ENCODE measurements at regions of chr2 and their contacts with region 1.

Region 1: GRCh38 chr2:63841254-63842022 is at the start of gene UGP2:
- DNase-seq: peak; percentile 88
- H3K4me3 Mint-ChIP-seq: peak within 1 kb of the TSS; percentile 99
- H3K27ac Mint-ChIP-seq: peak within 1 kb of the TSS; percentile 99
- H3K4me1 Mint-ChIP-seq: peaks cover 37% of the 10 kb centered on the region
- H3K27me3 Mint-ChIP-seq: no peaks in the 10 kb centered on the region
- total RNA-seq, gene UGP2: 82.2 to 93.1 TPM

Region 2: DNA sequence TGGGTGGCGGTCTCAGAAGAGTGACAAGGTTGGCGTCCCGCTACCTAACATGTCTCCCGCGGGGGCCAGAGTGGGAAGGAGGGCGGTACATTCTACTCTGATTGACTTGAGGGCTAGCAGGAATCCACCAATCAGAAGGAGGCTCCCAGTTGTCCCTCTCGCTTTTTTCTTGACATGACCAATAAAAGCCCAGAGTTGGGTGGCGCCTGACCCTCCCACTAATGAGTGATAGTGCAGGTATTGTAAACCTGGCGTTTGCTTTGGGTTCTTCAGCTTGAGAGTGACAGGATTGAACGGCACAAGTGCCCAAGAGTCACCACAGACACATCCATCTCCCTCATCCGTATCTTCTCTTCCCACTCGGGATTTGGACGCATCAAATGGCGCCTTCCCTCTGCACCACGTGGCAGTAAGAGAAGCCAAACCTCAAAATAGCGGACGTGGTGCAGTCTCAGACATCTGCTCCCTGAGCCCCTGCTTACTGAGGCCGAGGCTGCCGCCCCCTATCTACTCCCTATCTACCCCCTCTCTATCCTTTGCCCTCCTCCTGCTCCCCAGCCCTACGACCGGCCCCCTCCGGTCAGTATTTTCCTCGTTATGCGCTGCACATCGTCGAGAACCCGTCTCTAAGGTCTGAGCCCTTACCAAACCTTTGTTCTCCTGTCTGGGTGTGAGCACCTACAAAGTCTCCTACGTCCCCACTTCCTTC is 1986.8 kb before region 1 on chr2:
- CTCF ChIA-PET with region 1: no interaction called
- intact Hi-C with region 1: loop called (anchors 5 kb)
- DNase-seq: peak; percentile 95
- H3K4me3 Mint-ChIP-seq: peak overlapping the region; percentile 93
- H3K27ac Mint-ChIP-seq: peak overlapping the region; percentile 91
- H3K4me1 Mint-ChIP-seq: peaks cover 17% of the 10 kb centered on the region
- H3K27me3 Mint-ChIP-seq: no peaks in the 10 kb centered on the region

Region 3: GRCh38 chr2:62705007-62705829 is 1136.2 kb before region 1 on chr2 and contains the start of gene EHBP1:
- CTCF ChIA-PET with region 1: no interaction called
- intact Hi-C with region 1: loop called (anchors 2 kb)
- DNase-seq: peak; percentile 98
- H3K4me3 Mint-ChIP-seq: peak within 1 kb of the TSS; percentile 90
- H3K27ac Mint-ChIP-seq: peak within 1 kb of the TSS; percentile 76
- H3K4me1 Mint-ChIP-seq: peaks cover 27% of the 10 kb centered on the region
- H3K27me3 Mint-ChIP-seq: no peaks in the 10 kb centered on the region
- total RNA-seq, gene EHBP1: 17.4 to 17.5 TPM

Region 4: GRCh38 chr2:63856303-63856603 is 14.8 kb after region 1 on chr2:
- CTCF ChIA-PET with region 1: interaction called, 20 read pairs
- intact Hi-C with region 1: loop called (anchors 1 kb)
- DNase-seq: peak; percentile 67
- H3K4me3 Mint-ChIP-seq: peak overlapping the region; percentile 22
- H3K27ac Mint-ChIP-seq: peak overlapping the region; percentile 80
- H3K4me1 Mint-ChIP-seq: peaks cover 50% of the 10 kb centered on the region
- H3K27me3 Mint-ChIP-seq: no peaks in the 10 kb centered on the region

Region 5: GRCh38 chr2:64036034-64036705 is 194.7 kb after region 1 on chr2:
- CTCF ChIA-PET with region 1: no interaction called
- intact Hi-C with region 1: loop called (anchors 1 kb)
- DNase-seq: peak; percentile 37
- H3K4me3 Mint-ChIP-seq: peak overlapping the region; percentile 25
- H3K27ac Mint-ChIP-seq: peak overlapping the region; percentile 70
- H3K4me1 Mint-ChIP-seq: peaks cover 50% of the 10 kb centered on the region
- H3K27me3 Mint-ChIP-seq: no peaks in the 10 kb centered on the region

Region 6: GRCh38 chr2:64653349-64654062 is 812.1 kb after region 1 on chr2 and contains the start of gene SERTAD2:
- CTCF ChIA-PET with region 1: no interaction called
- intact Hi-C with region 1: loop called (anchors 10 kb)
- DNase-seq: peak; percentile 85
- H3K4me3 Mint-ChIP-seq: peak within 1 kb of the TSS; percentile 79
- H3K27ac Mint-ChIP-seq: peak within 1 kb of the TSS; percentile 83
- H3K4me1 Mint-ChIP-seq: peaks cover 74% of the 10 kb centered on the region
- H3K27me3 Mint-ChIP-seq: no peaks in the 10 kb centered on the region
- total RNA-seq, gene SERTAD2: 11.4 to 11.6 TPM

Region 7: GRCh38 chr2:65300761-65301711 is 1459.6 kb after region 1 on chr2:
- CTCF ChIA-PET with region 1: no interaction called
- intact Hi-C with region 1: loop called (anchors 2 kb)
- DNase-seq: peak; percentile 85
- H3K4me3 Mint-ChIP-seq: peak overlapping the region; percentile 62
- H3K27ac Mint-ChIP-seq: peak overlapping the region; percentile 82
- H3K4me1 Mint-ChIP-seq: peaks cover 41% of the 10 kb centered on the region
- H3K27me3 Mint-ChIP-seq: no peaks in the 10 kb centered on the region